PC-9 (cell line): ENCODE measurements at regions of chr19 and their contacts with region 1.

Region 1: GRCh38 chr19:41083516-41083915 is 4.7 kb upstream of the CYP2A13 start:
- DNase-seq: peak; percentile 79 to 98
- H3K4me3 ChIP-seq: no peak overlapping the region
- H3K27ac ChIP-seq: peak overlapping the region; percentile 97
- H3K4me1 ChIP-seq: peaks cover 35% of the 10 kb centered on the region
- H3K27me3 ChIP-seq: no peaks in the 10 kb centered on the region
- CTCF ChIP-seq: no peak

Region 2: DNA sequence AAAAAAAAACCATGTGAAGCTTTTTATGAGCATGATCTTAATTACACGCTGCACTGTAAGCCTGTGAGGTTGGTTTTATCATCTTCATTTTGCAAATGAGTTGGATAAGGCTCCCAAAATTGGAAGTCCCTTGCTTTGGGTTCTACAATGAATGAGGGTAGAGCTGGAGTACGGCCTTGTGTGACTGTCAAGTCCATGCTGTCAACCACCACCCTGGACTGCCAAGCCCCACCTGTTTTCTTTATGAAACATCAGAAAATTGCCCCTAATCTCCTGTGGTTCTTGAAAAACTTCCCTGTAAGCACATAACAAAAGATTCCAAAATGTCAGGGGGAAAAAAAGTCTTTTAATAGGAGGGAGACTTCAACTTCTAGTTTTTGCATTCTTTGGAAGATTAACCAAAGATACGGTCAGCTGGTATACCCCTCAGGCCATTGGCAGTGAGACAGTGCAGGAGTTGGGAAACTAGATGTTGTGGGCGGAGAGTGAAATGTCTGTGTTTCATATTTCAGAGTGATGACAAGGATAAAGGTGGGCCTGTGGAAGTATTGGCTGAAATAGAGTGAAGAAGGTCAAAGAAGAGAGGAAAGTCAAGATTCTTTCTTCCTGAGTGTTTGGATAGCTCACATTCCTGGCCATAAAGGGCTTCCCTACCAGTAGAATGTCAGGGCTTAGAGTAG is 51.7 kb before region 1 on chr19:
- CTCF ChIA-PET with region 1: no interaction called
- POLR2A ChIA-PET with region 1: no interaction called
- intact Hi-C with region 1: loop called (anchors 1 kb)
- DNase-seq: peak; percentile 67 to 91
- H3K4me3 ChIP-seq: no peak overlapping the region
- H3K27ac ChIP-seq: peak overlapping the region; percentile 46
- H3K4me1 ChIP-seq: peaks cover 25% of the 10 kb centered on the region
- H3K27me3 ChIP-seq: peaks cover under 1% of the 10 kb centered on the region; the same call in 1 of the 2 replicates
- CTCF ChIP-seq: no peak

Region 3: GRCh38 chr19:41114132-41114531 is 30.6 kb after region 1 on chr19 and contains the start of gene CYP2F1:
- CTCF ChIA-PET with region 1: interaction called, 15 read pairs
- POLR2A ChIA-PET with region 1: no interaction called
- intact Hi-C with region 1: no loop called
- DNase-seq: no peak
- H3K4me3 ChIP-seq: no peak within 1 kb of the TSS
- H3K27ac ChIP-seq: no peak within 1 kb of the TSS
- H3K4me1 ChIP-seq: peaks cover 4% of the 10 kb centered on the region; the same call in 1 of the 2 replicates
- H3K27me3 ChIP-seq: 0 out of 2 replicates have a peak, but pooled peaks cover 3% of the 10 kb centered on the region
- CTCF ChIP-seq: no peak
- total RNA-seq, gene CYP2F1: not detected in 2 replicates

Region 4: DNA sequence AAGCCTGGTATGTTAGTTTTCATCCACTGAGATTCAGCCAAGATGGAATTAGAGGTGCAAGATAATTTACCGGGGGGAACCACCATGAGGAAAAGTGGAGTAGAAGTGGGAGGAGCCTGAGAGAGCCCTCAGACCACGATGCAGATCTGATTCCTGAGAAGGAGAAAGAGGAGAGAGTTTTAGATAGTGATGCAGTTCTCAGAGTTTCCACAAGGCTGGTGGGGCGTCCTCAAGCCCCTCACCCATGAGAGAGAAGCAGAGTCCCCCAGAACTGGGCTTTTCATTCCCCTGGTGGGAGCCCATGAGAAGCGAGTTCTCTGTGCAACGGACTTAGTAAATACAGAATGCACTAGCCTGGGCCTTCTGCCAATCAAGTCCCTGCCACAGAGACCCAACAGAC is 643.0 kb after region 1 on chr19:
- CTCF ChIA-PET with region 1: no interaction called
- POLR2A ChIA-PET with region 1: no interaction called
- intact Hi-C with region 1: no loop called
- DNase-seq: no peak
- H3K4me3 ChIP-seq: no peak overlapping the region
- H3K27ac ChIP-seq: no peak overlapping the region
- H3K4me1 ChIP-seq: peaks cover 12% of the 10 kb centered on the region
- H3K27me3 ChIP-seq: no peaks in the 10 kb centered on the region
- CTCF ChIP-seq: no peak